HCT116 (cell line): ENCODE measurements at regions of chr6 and their contacts with region 1.

Region 1: DNA sequence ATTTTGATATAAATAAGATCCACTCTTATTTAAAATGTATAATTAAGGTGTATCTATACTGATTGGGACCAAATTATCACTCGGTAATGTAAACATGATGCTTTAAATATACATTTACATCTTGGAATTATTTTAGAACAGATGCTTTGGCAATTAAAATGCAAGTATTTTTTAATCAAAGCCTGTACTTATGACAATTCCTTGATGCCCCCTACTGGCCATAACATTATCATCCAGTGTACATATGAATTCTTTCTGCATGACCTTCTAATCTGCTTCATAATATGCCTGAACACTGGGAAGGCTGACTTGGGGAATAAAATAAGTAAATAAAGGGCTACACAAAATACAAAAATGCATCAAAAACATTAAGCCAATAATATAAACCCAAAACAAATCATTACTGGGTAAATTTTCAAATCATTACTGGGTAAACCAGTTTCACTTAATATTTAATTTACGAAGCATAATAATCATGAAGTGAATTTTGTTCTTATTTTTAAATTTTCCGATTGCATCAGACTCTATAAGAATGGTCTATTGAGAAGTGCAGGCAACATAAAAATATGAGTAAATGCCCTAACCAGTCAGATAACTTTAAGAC is 65.1 kb downstream of the CGA start:
- DNase-seq: peak; percentile 61
- ATAC-seq: peak; percentile 74
- H3K4me3 ChIP-seq: no peak overlapping the region
- H3K27ac ChIP-seq: no peak overlapping the region
- H3K4me1 ChIP-seq: no peaks in the 10 kb centered on the region
- H3K27me3 ChIP-seq: peaks cover 25% of the 10 kb centered on the region
- CTCF ChIP-seq: peak; percentile 30 to 81 (median 63); a peak in 5 of 6 replicates
- POLR2A ChIP-seq: no peak
- RAD21 ChIP-seq: peak; percentile 58

Region 2: DNA sequence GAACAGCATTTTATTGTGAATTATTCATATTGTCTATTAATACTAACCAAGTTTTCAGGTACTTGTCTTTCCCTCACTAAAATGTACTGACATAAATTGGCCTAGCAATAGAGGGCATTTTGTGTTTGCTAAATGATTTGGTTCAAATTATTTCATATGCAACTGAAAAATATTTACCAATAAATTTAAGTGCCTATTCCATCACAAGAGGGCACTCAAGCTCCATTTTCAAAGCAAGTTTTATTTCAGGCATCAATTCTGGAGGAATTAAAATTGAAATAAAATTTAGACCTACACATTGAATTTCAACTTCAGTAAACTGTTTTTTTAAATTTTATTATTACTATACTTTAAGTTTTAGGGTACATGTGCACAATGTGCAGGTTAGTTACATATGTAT is 1272.8 kb before region 1 on chr6:
- CTCF ChIA-PET with region 1: no interaction called
- POLR2A ChIA-PET with region 1: no interaction called
- RAD21 ChIA-PET with region 1: no interaction called
- intact Hi-C with region 1: loop called (anchors 2 kb)
- DNase-seq: peak; percentile 22
- ATAC-seq: no peak
- H3K4me3 ChIP-seq: no peak overlapping the region
- H3K27ac ChIP-seq: no peak overlapping the region
- H3K4me1 ChIP-seq: no peaks in the 10 kb centered on the region
- H3K27me3 ChIP-seq: no peaks in the 10 kb centered on the region
- CTCF ChIP-seq: peak; percentile 26 to 52 (median 48); a peak in 4 of 6 replicates
- POLR2A ChIP-seq: no peak
- RAD21 ChIP-seq: peak; percentile 72

Region 3: DNA sequence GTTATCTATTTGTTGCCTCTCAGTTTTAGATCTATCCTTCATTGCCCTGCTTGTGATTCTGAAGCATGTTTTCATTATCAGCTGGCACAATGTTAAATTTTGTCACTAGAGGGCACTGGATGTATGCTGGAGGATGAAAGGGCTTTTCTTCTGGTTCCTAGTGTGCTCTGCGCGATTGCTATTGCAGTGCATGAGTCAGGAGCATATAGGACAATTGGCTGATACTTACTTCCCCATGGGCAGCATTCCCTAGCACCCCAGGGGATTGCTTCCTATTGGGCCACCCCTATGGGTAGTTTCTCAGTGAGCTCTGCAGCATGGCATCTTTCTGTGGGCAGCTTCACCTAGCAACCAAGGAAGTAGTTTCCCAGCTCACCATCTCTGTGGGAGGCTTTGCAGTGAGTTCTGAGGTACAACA is 1106.8 kb before region 1 on chr6:
- CTCF ChIA-PET with region 1: no interaction called
- POLR2A ChIA-PET with region 1: no interaction called
- RAD21 ChIA-PET with region 1: no interaction called
- intact Hi-C with region 1: loop called (anchors 1 kb)
- DNase-seq: peak; percentile 22
- ATAC-seq: peak; percentile 86
- H3K4me3 ChIP-seq: no peak overlapping the region
- H3K27ac ChIP-seq: no peak overlapping the region
- H3K4me1 ChIP-seq: no peaks in the 10 kb centered on the region
- H3K27me3 ChIP-seq: peaks cover 3% of the 10 kb centered on the region; the same call in 1 of the 2 replicates
- CTCF ChIP-seq: peak; percentile 61 to 76 (median 62); a peak in 5 of 6 replicates
- POLR2A ChIP-seq: no peak
- RAD21 ChIP-seq: peak; percentile 80